MCF 10A (cell line): ENCODE measurements at regions of chr6 and their contacts with region 1.

Region 1: DNA sequence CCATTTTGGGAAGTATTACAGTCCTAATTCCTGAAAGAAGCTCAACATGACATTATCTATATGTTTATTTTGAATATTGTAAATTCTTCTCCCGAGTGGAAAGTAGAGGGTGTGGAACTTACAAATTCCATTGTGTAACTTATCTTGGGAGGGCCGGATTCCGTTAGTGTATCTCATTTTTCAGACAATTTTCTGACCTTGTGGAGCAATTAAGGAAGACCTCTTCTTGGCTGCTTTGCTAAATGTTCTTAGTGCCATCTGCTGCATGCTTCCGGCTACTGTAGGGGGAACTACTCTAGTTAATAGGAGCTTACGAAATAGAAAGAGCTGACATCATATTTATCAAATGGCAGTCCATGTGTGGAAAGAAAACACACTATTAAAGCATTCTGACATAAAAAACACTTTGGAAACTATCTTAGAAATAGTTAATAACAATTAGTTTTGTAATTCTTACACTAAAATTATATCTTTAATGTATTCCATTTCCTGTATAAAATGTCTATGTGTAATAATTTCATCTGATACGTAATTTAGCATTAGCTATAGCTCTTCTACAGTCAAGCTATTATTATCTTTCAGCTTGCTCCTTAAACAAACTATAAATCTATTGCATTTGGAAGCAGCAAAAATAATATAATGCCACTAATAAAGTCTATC is 41.5 kb upstream of the KCNQ5 start:
- DNase-seq: peak; percentile 73
- H3K4me3 Mint-ChIP-seq: no peak overlapping the region
- H3K27ac Mint-ChIP-seq: no peak overlapping the region
- H3K4me1 Mint-ChIP-seq: no peaks in the 10 kb centered on the region
- H3K27me3 Mint-ChIP-seq: no peaks in the 10 kb centered on the region
- CTCF ChIP-seq: peak; percentile 61

Region 2: GRCh38 chr6:72425003-72425681 is 155.3 kb before region 1 on chr6:
- CTCF ChIA-PET with region 1: interaction called, 12 read pairs
- POLR2A ChIA-PET with region 1: interaction called, 5 read pairs
- intact Hi-C with region 1: no loop called
- DNase-seq: no peak
- H3K4me3 Mint-ChIP-seq: no peak overlapping the region
- H3K27ac Mint-ChIP-seq: no peak overlapping the region
- H3K4me1 Mint-ChIP-seq: no peaks in the 10 kb centered on the region
- H3K27me3 Mint-ChIP-seq: no peaks in the 10 kb centered on the region
- CTCF ChIP-seq: no peak

Region 3: GRCh38 chr6:72560721-72561593 is 19.5 kb before region 1 on chr6:
- CTCF ChIA-PET with region 1: interaction called, 13 read pairs
- POLR2A ChIA-PET with region 1: no interaction called
- intact Hi-C with region 1: no loop called
- DNase-seq: no peak
- H3K4me3 Mint-ChIP-seq: no peak overlapping the region
- H3K27ac Mint-ChIP-seq: no peak overlapping the region
- H3K4me1 Mint-ChIP-seq: no peaks in the 10 kb centered on the region
- H3K27me3 Mint-ChIP-seq: no peaks in the 10 kb centered on the region
- CTCF ChIP-seq: no peak

Region 4: DNA sequence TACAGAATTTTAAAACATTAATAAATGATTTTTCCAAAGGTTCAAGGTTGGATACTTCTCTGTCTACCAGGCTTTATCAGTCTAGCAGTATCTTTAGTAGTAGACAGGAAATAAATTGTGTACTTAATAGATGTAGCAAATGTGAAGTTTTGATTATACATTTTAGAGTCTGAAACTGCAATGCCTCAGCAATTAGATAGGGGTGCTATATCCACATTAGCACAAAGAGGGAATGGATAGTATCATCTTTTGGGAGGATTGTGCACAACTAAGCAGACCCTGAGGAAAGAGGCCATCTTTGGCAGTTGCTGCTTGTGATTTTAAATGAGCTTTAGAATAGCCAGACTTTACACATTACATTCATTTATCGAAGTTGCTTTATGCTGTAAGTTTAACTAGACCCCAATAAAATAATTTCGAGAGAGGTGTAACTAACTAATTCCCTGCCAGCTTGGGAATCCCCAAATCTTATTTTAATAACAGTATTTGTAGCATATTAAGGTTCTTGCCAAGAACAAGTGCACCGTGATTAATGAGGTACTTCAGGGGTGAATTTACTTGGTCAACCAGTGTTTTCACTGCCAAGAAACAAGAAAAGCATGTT is 44.2 kb after region 1 on chr6:
- CTCF ChIA-PET with region 1: no interaction called
- POLR2A ChIA-PET with region 1: no interaction called
- intact Hi-C with region 1: no loop called
- DNase-seq: peak; percentile 35
- H3K4me3 Mint-ChIP-seq: no peak overlapping the region
- H3K27ac Mint-ChIP-seq: no peak overlapping the region
- H3K4me1 Mint-ChIP-seq: peaks cover 15% of the 10 kb centered on the region
- H3K27me3 Mint-ChIP-seq: no peaks in the 10 kb centered on the region
- CTCF ChIP-seq: peak; percentile 57

Region 5: GRCh38 chr6:72784581-72784980 is 204.2 kb after region 1 on chr6:
- CTCF ChIA-PET with region 1: no interaction called
- POLR2A ChIA-PET with region 1: no interaction called
- intact Hi-C with region 1: no loop called
- DNase-seq: no peak
- H3K4me3 Mint-ChIP-seq: no peak overlapping the region
- H3K27ac Mint-ChIP-seq: no peak overlapping the region
- H3K4me1 Mint-ChIP-seq: peaks cover 33% of the 10 kb centered on the region
- H3K27me3 Mint-ChIP-seq: no peaks in the 10 kb centered on the region
- CTCF ChIP-seq: no peak

Region 6: DNA sequence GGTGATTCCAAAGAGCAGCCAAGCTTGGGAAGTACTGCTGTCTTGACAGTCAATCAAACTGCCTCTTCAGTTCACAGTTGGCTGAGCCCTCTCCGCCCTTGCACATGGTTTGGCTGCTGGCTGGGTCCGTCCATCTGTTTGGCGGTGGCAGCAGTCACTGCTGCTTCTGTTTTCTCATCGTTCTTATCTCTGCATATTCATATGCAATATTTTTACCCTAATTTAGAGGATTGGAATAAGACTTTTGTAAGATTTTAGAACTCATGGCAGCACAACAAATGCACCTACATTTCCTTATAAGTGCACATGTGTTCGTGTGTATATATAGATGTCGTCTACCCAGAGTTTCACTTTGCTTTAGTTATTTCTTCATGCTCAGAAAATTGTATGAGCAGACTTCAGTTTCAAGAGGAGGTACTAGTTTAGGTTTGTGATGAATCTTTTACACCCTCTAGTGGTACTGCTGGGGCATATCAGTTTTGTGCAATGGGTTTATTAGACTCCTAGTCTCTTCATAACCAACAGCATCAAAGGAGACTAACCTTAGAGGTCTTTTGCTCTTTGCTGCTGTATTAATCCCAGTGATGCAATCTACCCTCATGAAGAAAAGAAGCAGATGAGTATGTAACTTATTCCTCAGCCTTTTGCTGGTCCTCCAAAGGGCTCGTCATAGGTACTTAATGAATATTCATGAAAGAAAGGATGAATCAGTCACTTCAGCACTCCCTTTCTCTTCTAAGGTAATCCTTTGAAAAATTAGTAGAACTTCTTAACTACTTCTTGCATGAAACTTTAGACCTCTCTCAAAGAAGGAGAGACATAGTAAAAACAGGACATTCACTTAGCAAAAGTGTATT is 600.6 kb after region 1 on chr6:
- CTCF ChIA-PET with region 1: interaction called, 3 read pairs
- POLR2A ChIA-PET with region 1: no interaction called
- intact Hi-C with region 1: loop called (anchors 5 kb)
- DNase-seq: peak; percentile 70
- H3K4me3 Mint-ChIP-seq: peak overlapping the region; percentile 51
- H3K27ac Mint-ChIP-seq: no peak overlapping the region
- H3K4me1 Mint-ChIP-seq: no peaks in the 10 kb centered on the region
- H3K27me3 Mint-ChIP-seq: no peaks in the 10 kb centered on the region
- CTCF ChIP-seq: peak; percentile 81